Mucosa of descending colon (tissue), 3 donors: ENCODE measurements at regions of chr2 and their contacts with region 1.

Region 1: GRCh38 chr2:181742922-181743722 is 62.8 kb upstream of the NEUROD1 start:
- DNase-seq: peak in 1 of 3 donors; percentile 78
- ATAC-seq: peak; percentile 72
- H3K4me3 ChIP-seq: no peak overlapping the region
- H3K4me1 ChIP-seq: no peaks in the 10 kb centered on the region
- CTCF ChIP-seq: no peak

Region 2: DNA sequence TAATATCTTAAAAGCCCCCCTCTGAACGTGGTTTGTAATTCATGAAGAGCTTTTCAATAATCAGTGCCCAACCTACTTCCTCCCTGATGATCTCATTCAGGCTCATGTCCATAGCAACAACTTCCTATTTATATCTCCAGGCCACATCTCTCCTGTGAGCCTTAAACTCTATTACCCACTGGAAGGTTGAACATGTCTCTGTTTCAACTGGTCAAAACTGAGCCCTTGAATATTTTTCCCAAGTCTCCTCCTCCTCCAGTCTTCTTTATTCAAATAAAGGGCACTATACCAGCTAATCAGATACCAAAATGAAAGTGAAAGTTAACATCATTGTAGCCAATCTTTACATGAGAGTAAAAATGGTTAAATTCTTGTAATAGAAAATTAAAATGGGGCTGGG is 349.6 kb before region 1 on chr2:
- intact Hi-C with region 1: no loop called
- DNase-seq: no peak
- ATAC-seq: peak; percentile 67
- H3K4me3 ChIP-seq: no peak overlapping the region
- H3K4me1 ChIP-seq: no peaks in the 10 kb centered on the region
- CTCF ChIP-seq: no peak

Region 3: DNA sequence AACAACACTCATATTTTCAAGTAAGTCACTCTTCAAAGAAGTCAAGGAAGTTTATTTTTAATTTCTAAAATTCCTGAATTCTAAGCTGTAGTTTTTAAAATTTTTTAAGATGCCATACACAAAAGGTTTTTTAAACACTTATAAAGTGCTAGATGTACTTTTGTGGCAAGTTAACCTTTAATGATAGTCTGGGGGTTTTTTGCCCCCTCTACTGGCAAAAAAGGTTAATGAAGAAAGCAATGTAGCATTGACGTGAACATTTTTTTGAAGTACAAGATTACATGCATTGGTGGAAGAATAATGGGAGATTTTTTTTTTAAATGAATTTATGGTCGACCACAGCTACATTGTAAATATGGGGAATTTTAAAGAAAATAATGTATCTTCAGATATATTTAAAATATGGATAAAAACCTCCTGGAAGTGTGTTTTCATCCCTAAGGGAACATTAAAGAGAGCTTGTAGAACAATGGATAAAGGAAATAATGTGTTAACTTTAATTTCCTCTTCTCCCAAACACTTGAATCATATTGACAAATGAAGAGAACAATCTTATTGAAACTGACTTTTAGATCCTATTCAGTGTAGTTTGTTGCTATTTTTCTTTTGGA is 161.0 kb after region 1 on chr2:
- intact Hi-C with region 1: loop called in 1 of 2 experiments (anchors 10 kb)
- DNase-seq: peak in 1 of 3 donors; percentile 29
- ATAC-seq: no peak
- H3K4me3 ChIP-seq: no peak overlapping the region
- H3K4me1 ChIP-seq: peaks cover 14% of the 10 kb centered on the region
- CTCF ChIP-seq: no peak

Region 4: GRCh38 chr2:182077451-182078142 is 334.5 kb after region 1 on chr2:
- intact Hi-C with region 1: loop called in 1 of 2 experiments (anchors 5 kb)
- DNase-seq: peak in 2 of 3 donors; percentile 40 to 85
- ATAC-seq: peak; percentile 84
- H3K4me3 ChIP-seq: no peak overlapping the region
- H3K4me1 ChIP-seq: peaks cover 15% of the 10 kb centered on the region
- CTCF ChIP-seq: peak; percentile 41

Region 5: GRCh38 chr2:182207049-182207746 is 464.1 kb after region 1 on chr2:
- intact Hi-C with region 1: no loop called
- DNase-seq: no peak
- ATAC-seq: no peak
- H3K4me3 ChIP-seq: no peak overlapping the region
- H3K4me1 ChIP-seq: no peaks in the 10 kb centered on the region
- CTCF ChIP-seq: no peak